AG04449 (cell line): ENCODE measurements at regions of chr1 and their contacts with region 1.

Region 1: GRCh38 chr1:211323156-211324063 is 3.2 kb upstream of the TRAF5 start:
- DNase-seq: no peak
- H3K4me3 ChIP-seq: no peak overlapping the region
- CTCF ChIP-seq: peak; percentile 83

Region 2: GRCh38 chr1:210951279-210951678 is 372.1 kb before region 1 on chr1:
- CTCF ChIA-PET with region 1: no interaction called
- POLR2A ChIA-PET with region 1: no interaction called
- DNase-seq: no peak
- H3K4me3 ChIP-seq: no peak overlapping the region
- CTCF ChIP-seq: no peak

Region 3: DNA sequence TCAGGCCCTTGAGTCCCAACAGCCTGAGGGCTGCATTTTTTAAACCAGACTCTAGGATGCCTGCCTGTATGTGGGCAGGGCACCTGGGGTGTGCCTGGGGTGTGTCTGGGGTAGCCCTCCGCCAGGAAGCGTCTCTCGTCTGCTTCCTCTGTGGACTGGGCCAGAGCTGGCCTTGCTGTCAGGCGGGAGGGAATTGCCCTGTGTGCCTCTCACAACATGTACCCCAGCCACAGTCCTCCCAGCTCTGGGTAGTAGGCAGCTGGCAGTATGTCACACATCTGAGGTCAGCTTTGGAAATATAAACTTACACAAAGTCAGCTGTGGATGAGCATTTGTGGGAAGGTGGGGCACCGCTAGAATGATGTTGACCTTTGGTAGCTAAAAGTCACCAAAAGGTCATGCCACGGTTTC is 16.2 kb after region 1 on chr1:
- CTCF ChIA-PET with region 1: interaction called, 10 read pairs
- POLR2A ChIA-PET with region 1: interaction called, 5 read pairs
- DNase-seq: no peak
- H3K4me3 ChIP-seq: no peak overlapping the region
- CTCF ChIP-seq: no peak

Region 4: DNA sequence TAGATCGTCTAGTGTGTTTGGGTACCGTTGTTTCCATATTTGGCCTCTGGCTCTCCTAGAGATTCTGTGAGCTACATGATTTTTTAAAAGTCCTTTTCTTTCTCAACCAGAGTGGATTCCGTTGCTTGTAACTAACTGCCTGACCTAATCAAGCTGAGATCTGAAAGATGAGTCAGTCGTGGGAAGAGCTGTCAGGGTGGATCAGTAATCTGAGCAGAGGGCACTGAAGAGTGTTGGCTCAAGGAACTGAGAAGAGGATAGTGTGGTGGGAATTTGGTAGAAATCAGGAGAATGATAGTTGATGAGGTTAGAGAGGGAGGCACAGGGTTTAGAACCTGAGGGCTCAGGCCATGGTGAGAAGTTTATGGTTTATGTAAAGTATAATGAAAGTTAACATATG is 55.4 kb after region 1 on chr1:
- CTCF ChIA-PET with region 1: interaction called, 12 read pairs
- POLR2A ChIA-PET with region 1: no interaction called
- DNase-seq: peak; percentile 53
- H3K4me3 ChIP-seq: no peak overlapping the region
- CTCF ChIP-seq: no peak

Region 5: DNA sequence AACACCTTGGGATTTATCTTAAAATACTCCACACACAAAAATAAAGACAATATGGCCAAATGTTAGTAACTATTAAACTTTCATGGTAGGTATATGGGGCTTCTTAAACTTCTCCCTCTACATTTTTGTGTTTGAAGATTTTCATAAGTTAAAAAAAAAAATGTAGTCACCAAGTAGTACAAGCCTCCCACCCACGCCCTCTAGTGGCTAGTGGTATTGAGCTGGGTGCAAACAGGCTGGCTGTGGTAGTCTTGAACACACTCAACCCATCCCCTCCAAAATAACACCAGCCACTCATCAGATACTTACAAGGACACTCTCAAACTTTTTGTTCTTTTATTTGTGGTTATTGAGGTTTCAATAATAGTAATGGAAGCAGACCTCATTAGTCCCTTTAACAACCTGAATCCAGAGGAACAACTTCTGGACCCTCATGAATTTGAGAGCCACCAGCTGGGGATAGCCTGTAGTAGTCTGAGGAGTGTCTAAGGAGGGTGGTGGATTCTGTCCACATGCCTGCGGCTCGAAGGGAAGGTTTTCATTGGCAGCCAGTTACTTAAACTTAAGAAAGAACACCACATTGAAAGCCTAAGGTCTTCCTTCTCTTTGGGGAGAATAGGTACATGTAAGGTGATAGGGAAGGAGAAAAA is 152.9 kb after region 1 on chr1:
- CTCF ChIA-PET with region 1: interaction called, 39 read pairs
- POLR2A ChIA-PET with region 1: interaction called, 4 read pairs
- DNase-seq: peak; percentile 17
- H3K4me3 ChIP-seq: no peak overlapping the region
- CTCF ChIP-seq: peak; percentile 82